Uterus (tissue), 4 donors: ENCODE measurements at regions of chr20 and their contacts with region 1.

Region 1: DNA sequence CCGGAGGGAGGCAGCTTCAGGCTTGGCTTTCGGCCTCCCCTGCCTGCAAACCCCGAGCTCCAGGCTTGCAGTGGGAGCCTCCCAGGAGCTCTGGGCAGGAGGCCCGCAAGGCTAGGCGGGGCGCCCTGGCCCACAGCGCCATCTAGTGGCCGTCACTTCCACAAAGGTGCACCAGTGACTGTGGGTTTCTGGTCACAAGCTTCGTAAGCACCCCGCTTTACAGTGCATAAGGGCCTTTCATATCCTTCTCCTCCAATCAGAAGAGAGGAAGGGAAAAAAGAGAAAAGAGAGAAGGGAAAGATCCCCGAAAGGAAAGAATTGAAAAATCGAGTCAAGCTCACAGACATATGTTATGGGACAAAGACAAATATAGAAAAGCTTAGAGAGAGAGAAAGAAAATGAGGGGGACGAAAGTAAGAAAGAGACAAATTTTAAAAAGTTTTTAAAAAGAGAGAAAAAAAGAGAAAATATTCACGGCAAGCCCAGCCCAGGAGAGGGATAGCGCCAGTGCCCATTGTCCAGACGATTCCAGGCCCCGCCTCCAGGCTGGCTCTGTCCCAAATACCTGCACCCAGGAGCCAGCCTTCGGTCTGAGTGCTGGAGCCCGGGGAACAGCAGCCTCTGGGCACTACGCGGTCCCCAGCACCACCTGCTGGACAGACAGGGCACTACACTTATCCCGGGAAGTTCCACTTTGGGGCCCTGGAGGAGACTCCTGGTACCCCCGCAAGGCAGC is 207.1 kb downstream of the PREX1 start:
- DNase-seq: peak; percentile 90 to 93
- H3K4me3 ChIP-seq: peak overlapping the region in 1 of 2 donors; percentile 28
- H3K27ac ChIP-seq: peak overlapping the region in 1 of 2 donors; percentile 44
- H3K4me1 ChIP-seq: no peaks in the 10 kb centered on the region
- H3K27me3 ChIP-seq: no peaks in the 10 kb centered on the region
- CTCF ChIP-seq: peak; percentile 77 to 97 (median 96)
- POLR2A ChIP-seq: no peak

Region 2: GRCh38 chr20:47663333-47664067 is 957.2 kb before region 1 on chr20:
- intact Hi-C with region 1: loop called (anchors 5 kb)
- DNase-seq: peak; percentile 83
- H3K4me3 ChIP-seq: no peak overlapping the region
- H3K27ac ChIP-seq: peak overlapping the region; percentile 46 to 55
- H3K4me1 ChIP-seq: no peaks in the 10 kb centered on the region
- H3K27me3 ChIP-seq: no peaks in the 10 kb centered on the region
- CTCF ChIP-seq: peak; percentile 91 to 98 (median 96)
- POLR2A ChIP-seq: peak in 1 of 2 donors; percentile 15

Region 3: GRCh38 chr20:47677635-47678453 is 942.8 kb before region 1 on chr20:
- intact Hi-C with region 1: loop called (anchors 5 kb)
- DNase-seq: peak; percentile 47 to 59
- H3K4me3 ChIP-seq: no peak overlapping the region
- H3K27ac ChIP-seq: no peak overlapping the region
- H3K4me1 ChIP-seq: peaks cover 2 to 12% of the 10 kb centered on the region in 2 donors
- H3K27me3 ChIP-seq: no peaks in the 10 kb centered on the region
- CTCF ChIP-seq: peak; percentile 69 to 83 (median 76)
- POLR2A ChIP-seq: no peak

Region 4: DNA sequence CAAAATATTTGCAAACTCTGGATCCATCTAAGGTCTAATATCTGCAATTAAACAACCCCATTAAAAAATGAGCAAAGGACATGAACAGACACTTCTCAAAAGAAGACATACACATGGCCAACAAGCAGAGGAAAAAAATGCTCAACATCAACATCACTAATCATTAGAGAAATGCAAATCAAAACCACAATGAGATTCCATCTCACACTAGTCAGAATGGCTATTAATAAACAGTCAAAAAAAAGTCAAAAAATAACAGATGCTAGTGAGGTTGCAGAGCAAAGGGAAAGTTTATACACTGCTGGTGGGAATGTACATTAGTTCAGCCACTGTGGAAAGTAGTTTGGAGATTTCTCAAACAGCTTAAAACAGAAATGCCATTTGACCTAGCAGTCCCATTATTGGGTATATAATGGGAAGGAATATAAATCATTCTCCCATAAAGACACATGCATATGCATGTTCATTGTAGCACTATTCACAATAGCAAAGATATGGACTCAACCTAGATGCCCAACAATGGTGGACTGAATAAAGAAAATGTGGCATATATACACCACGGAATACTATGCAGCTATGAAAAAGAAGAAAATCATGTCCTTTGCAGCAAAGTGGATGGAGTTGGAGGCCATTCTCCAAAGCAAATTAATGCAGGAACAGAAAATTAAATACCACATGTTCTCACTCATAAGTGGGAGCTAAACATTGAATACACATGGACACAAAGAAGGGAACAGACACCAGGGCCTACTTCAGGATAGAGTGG is 648.1 kb after region 1 on chr20:
- intact Hi-C with region 1: no loop called
- DNase-seq: no peak
- H3K4me3 ChIP-seq: no peak overlapping the region
- H3K27ac ChIP-seq: no peak overlapping the region
- H3K4me1 ChIP-seq: peaks cover 0 to 8% of the 10 kb centered on the region in 2 donors
- H3K27me3 ChIP-seq: no peaks in the 10 kb centered on the region
- CTCF ChIP-seq: no peak
- POLR2A ChIP-seq: no peak